ENCODE measurements at regions of chr19 and their contacts with region 1.

Region 1: GRCh38 chr19:1020868-1021425 is at the start of gene TMEM259:
- DNase-seq: peak; percentile 99
- H3K4me3 ChIP-seq: peak within 1 kb of the TSS; percentile 100
- H3K27ac ChIP-seq: peak within 1 kb of the TSS; percentile 98
- H3K4me1 ChIP-seq: peaks cover 26% of the 10 kb centered on the region
- H3K27me3 ChIP-seq: no peaks in the 10 kb centered on the region
- CTCF ChIP-seq: no peak
- total RNA-seq, gene TMEM259: 151 and 170 TPM in 2 replicates

Region 2: GRCh38 chr19:1103708-1104310 is 82.9 kb after region 1 on chr19 and contains the start of gene GPX4:
- CTCF ChIA-PET with region 1: no interaction called
- POLR2A ChIA-PET with region 1: no interaction called
- intact Hi-C with region 1: loop called (anchors 10 kb)
- DNase-seq: peak; percentile 100
- H3K4me3 ChIP-seq: peak within 1 kb of the TSS; percentile 97
- H3K27ac ChIP-seq: peak within 1 kb of the TSS; percentile 94
- H3K4me1 ChIP-seq: peaks cover 30% of the 10 kb centered on the region
- H3K27me3 ChIP-seq: no peaks in the 10 kb centered on the region
- CTCF ChIP-seq: no peak
- total RNA-seq, gene GPX4: 368 and 435 TPM in 2 replicates

Region 3: GRCh38 chr19:1213391-1214286 is 192.7 kb after region 1 on chr19:
- CTCF ChIA-PET with region 1: no interaction called
- POLR2A ChIA-PET with region 1: no interaction called
- intact Hi-C with region 1: loop called (anchors 10 kb)
- DNase-seq: peak; percentile 92
- H3K4me3 ChIP-seq: peak overlapping the region; percentile 2
- H3K27ac ChIP-seq: peak overlapping the region; percentile 87
- H3K4me1 ChIP-seq: peaks cover 49% of the 10 kb centered on the region
- H3K27me3 ChIP-seq: no peaks in the 10 kb centered on the region
- CTCF ChIP-seq: no peak

Region 4: DNA sequence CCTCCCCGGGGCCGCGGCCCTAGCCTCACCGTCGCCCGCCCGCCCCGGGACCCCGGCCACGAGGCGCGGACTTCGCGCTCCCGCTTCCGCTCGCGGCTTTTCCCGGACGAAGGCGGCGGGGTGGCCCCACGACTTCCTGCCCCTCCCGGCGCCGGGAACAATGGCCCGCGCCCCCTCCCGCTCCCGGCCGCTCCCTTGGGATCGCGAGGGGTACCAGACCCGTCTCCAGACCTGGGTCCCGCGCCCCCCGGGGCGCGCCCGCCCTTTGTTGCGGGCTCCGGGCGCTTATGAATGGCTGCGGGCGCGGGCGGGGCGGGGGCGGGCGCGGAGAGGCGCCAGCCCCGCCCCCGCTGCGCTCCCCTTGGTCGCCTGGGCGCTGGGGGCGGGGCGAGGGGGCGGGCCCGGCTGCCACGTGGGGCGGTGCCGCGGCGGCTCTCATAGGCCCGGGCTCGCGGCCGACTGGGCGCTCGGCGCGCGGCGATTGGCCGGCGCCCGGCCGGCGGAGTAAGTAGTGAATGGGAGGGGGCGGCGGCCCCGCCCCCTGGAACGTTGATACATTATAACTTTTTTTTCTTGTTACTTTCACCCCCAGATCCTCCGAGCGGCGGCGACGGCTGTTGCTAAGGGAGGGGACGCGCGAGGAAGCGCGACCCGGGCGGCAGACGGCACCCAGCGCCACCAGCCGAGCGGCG is 228.5 kb after region 1 on chr19:
- CTCF ChIA-PET with region 1: no interaction called
- POLR2A ChIA-PET with region 1: no interaction called
- intact Hi-C with region 1: loop called (anchors 10 kb)
- DNase-seq: peak; percentile 98
- H3K4me3 ChIP-seq: peak overlapping the region; percentile 96
- H3K27ac ChIP-seq: peak overlapping the region; percentile 99
- H3K4me1 ChIP-seq: peaks cover 25% of the 10 kb centered on the region
- H3K27me3 ChIP-seq: no peaks in the 10 kb centered on the region
- CTCF ChIP-seq: no peak